Dorsolateral prefrontal cortex (tissue), 120 donors: ENCODE measurements at regions of chr11 and their contacts with region 1.

Region 1: DNA sequence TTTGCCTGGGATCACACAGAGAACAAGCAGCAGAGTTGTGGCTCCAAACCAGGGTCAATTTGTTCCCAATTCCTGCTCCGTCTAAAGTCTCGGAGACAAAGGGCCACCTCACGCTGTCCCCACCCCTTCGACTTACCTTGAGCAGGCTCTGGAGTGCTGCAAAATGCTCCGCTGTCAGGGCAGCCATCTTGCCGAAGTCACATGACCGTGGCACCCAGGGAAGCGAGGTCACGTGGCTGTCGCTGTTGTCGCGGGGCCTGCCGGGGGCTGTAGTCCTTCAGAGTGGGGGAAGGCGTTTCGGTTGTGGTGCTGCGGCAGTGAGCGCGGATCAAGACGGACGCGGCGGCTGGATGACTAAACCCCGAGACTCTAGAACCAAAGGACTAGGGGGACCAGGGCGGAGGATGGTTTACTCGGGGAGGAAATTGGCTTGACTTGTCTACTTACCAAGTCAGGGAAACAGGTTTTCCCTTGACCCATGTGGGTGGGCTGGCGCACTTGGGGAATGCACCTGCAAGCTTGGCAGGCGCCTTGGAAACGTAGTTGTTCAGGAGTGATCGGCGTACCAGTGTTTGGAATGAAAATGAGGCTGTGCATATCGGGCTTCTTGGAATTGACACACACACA is at the start of gene COMMD9:
- DNase-seq: peak; percentile 94 to 98 (median 97)
- H3K4me3 ChIP-seq: peak within 1 kb of the TSS; percentile 63 to 98 (median 81)
- H3K27ac ChIP-seq: peak within 1 kb of the TSS; percentile 7 to 94 (median 87)
- H3K27me3 ChIP-seq: no peaks in the 10 kb centered on the region
- CTCF ChIP-seq: peak in 42 of 56 donors; percentile 3 to 63 (median 33)
- total RNA-seq, gene COMMD9: 43.1 to 107 (median 76.9) TPM

Region 2: GRCh38 chr11:36354221-36355003 is 65.1 kb after region 1 on chr11:
- intact Hi-C with region 1: no loop called
- DNase-seq: no peak
- H3K4me3 ChIP-seq: no peak overlapping the region
- H3K27ac ChIP-seq: peak overlapping the region in 29 of 59 donors; percentile 6 to 78 (median 69)
- H3K27me3 ChIP-seq: no peaks in the 10 kb centered on the region
- CTCF ChIP-seq: no peak

Region 3: DNA sequence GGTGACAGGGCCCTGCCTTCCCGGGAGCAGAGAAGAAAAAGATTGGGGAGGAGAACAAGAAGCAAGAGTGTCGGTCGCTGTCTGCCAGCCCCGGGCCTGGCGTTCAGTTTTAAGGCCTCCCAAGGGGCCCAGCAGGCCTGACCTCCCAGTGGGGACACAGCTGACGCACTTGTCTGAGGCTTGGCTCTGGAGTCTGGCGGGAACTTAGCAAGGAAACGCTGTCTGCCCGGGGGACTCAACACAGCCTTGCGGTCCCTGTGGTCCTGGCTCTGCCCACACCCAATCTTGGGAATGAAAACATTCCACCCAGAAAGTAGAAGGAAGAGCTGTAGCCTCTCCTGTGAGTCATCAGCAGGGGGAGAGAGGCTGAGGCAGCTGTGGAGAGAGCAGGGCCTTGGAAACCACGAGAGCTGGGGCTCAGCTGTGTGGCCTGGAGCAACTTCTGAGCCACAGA is 166.3 kb after region 1 on chr11:
- intact Hi-C with region 1: no loop called
- DNase-seq: peak in 3 of 10 donors; percentile 27 to 67 (median 32)
- H3K4me3 ChIP-seq: peak overlapping the region in 1 of 59 donors; percentile 12
- H3K27ac ChIP-seq: peak overlapping the region; percentile 37 to 93 (median 86)
- H3K27me3 ChIP-seq: no peaks in the 10 kb centered on the region
- CTCF ChIP-seq: peak in 2 of 56 donors; percentile 22 to 23

Region 4: GRCh38 chr11:36478700-36479329 is 189.5 kb after region 1 on chr11:
- intact Hi-C with region 1: loop called (anchors 1 to 5 kb)
- DNase-seq: peak in 3 of 10 donors; percentile 25 to 71 (median 61)
- H3K4me3 ChIP-seq: no peak overlapping the region
- H3K27ac ChIP-seq: peak overlapping the region in 21 of 59 donors; percentile 1 to 70 (median 27)
- H3K27me3 ChIP-seq: no peaks in the 10 kb centered on the region
- CTCF ChIP-seq: peak in 55 of 56 donors; percentile 53 to 90 (median 76)

Region 5: GRCh38 chr11:36492724-36493304 is 203.5 kb after region 1 on chr11:
- intact Hi-C with region 1: loop called in 1 of 2 experiments (anchors 5 kb)
- DNase-seq: peak in 1 of 10 donors; percentile 28
- H3K4me3 ChIP-seq: no peak overlapping the region
- H3K27ac ChIP-seq: peak overlapping the region in 16 of 59 donors; percentile 3 to 60 (median 28)
- H3K27me3 ChIP-seq: no peaks in the 10 kb centered on the region
- CTCF ChIP-seq: peak; percentile 61 to 91 (median 80)